ENCODE measurements at regions of chr3 and their contacts with region 1.

Region 1: GRCh38 chr3:128313935-128314334 is 152.8 kb downstream of the DNAJB8 start:
- DNase-seq: no peak
- H3K4me3 Mint-ChIP-seq: no peak overlapping the region
- H3K27ac Mint-ChIP-seq: no peak overlapping the region
- H3K4me1 Mint-ChIP-seq: peaks cover 48% of the 10 kb centered on the region
- H3K27me3 Mint-ChIP-seq: no peaks in the 10 kb centered on the region

Region 2: GRCh38 chr3:128294999-128295468 is 18.9 kb before region 1 on chr3:
- CTCF ChIA-PET with region 1: no interaction called
- POLR2A ChIA-PET with region 1: no interaction called
- intact Hi-C with region 1: loop called (anchors 2 kb)
- DNase-seq: no peak
- H3K4me3 Mint-ChIP-seq: no peak overlapping the region
- H3K27ac Mint-ChIP-seq: peak overlapping the region; percentile 77
- H3K4me1 Mint-ChIP-seq: peaks cover 45% of the 10 kb centered on the region
- H3K27me3 Mint-ChIP-seq: no peaks in the 10 kb centered on the region

Measured in activated CD4-positive, alpha-beta memory T cell treated with anti-CD3 and anti-CD28 coated beads for 36 hours (primary cell).